ENCODE measurements at regions of chr16 and their contacts with region 1.

Region 1: DNA sequence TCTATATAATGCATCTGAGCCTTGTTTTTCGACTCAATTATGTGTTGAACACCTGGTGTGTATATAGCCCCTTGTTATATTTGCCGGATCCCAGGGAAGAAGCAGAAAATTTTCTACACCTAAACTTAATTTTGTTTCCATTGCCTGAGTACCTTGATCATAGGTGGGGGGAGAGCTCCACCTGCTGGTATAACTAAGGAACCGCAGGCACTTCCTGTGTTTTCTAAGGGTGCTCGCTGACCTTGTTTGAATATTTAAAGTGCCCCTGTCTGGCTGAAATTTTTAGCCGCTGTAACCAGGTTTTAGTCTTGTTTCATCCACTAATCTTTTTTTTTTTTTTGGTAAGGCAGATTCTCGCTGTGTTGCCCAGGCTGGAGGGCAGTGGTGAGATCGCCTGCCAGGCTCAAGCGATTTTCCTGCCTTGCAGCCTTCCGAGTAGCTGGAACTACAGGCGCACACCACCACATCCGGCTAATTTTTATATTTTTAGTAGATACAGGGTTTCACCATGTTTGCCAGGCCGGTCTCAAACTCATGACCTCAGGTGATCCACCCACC is 6.5 kb upstream of the NUBP1 start:
- DNase-seq: peak; percentile 80
- H3K4me3 Mint-ChIP-seq: peak overlapping the region; percentile 29
- H3K27ac Mint-ChIP-seq: no peak overlapping the region
- H3K4me1 Mint-ChIP-seq: peaks cover 19% of the 10 kb centered on the region
- H3K27me3 Mint-ChIP-seq: no peaks in the 10 kb centered on the region

Region 2: GRCh38 chr16:8868416-8869211 is 1868.5 kb before region 1 on chr16 and contains the start of gene CARHSP1:
- CTCF ChIA-PET with region 1: no interaction called
- intact Hi-C with region 1: loop called (anchors 2 kb)
- DNase-seq: peak; percentile 81
- H3K4me3 Mint-ChIP-seq: peak within 1 kb of the TSS; percentile 89
- H3K27ac Mint-ChIP-seq: peak within 1 kb of the TSS; percentile 83
- H3K4me1 Mint-ChIP-seq: peaks cover 36% of the 10 kb centered on the region
- H3K27me3 Mint-ChIP-seq: no peaks in the 10 kb centered on the region
- total RNA-seq, gene CARHSP1: 46.5 to 49.6 TPM

Region 3: GRCh38 chr16:10256784-10257641 is 480.1 kb before region 1 on chr16:
- CTCF ChIA-PET with region 1: interaction called, 3 read pairs
- intact Hi-C with region 1: loop called (anchors 1 kb)
- DNase-seq: peak; percentile 53
- H3K4me3 Mint-ChIP-seq: no peak overlapping the region
- H3K27ac Mint-ChIP-seq: no peak overlapping the region
- H3K4me1 Mint-ChIP-seq: peaks cover 6% of the 10 kb centered on the region
- H3K27me3 Mint-ChIP-seq: peaks cover 5% of the 10 kb centered on the region

Region 4: GRCh38 chr16:10314811-10315210 is 422.3 kb before region 1 on chr16:
- CTCF ChIA-PET with region 1: no interaction called
- intact Hi-C with region 1: loop called (anchors 2 kb)
- DNase-seq: peak; percentile 16
- H3K4me3 Mint-ChIP-seq: no peak overlapping the region
- H3K27ac Mint-ChIP-seq: no peak overlapping the region
- H3K4me1 Mint-ChIP-seq: peaks cover 11% of the 10 kb centered on the region
- H3K27me3 Mint-ChIP-seq: no peaks in the 10 kb centered on the region

Region 5: DNA sequence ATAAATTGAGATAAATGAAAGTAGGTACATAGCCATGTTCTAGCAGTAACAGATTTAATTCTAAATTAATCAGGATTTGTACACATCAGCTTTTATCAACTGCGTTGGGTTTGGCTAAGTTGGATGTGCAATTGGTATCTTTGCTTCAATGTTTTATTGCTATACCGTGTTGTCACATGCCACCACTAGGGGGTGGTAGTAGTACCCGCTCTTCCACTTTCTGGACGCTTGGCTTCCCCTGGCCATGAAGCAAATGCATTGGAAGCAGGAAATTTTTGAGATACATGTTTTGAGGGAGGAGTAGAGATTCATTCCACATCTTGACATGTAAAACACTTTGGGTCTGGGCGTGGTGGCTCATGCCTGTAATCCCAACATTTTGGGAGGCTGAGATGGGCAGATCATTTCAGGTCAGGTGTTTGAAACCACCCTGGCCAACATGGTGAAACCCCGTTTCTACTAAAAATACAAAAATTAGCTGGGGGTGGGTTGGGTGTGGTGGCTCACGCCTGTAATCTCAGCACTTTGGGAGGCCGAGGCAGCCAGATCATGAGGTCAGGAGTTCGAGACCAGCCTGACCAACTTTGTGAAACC is 215.4 kb before region 1 on chr16:
- CTCF ChIA-PET with region 1: interaction called, 30 read pairs
- intact Hi-C with region 1: loop called (anchors 1 kb)
- DNase-seq: peak; percentile 64
- H3K4me3 Mint-ChIP-seq: no peak overlapping the region
- H3K27ac Mint-ChIP-seq: no peak overlapping the region
- H3K4me1 Mint-ChIP-seq: no peaks in the 10 kb centered on the region
- H3K27me3 Mint-ChIP-seq: no peaks in the 10 kb centered on the region

Region 6: GRCh38 chr16:10668322-10669045 is 68.7 kb before region 1 on chr16:
- CTCF ChIA-PET with region 1: interaction called, 3 read pairs
- intact Hi-C with region 1: loop called (anchors 1 kb)
- DNase-seq: peak; percentile 20
- H3K4me3 Mint-ChIP-seq: no peak overlapping the region
- H3K27ac Mint-ChIP-seq: no peak overlapping the region
- H3K4me1 Mint-ChIP-seq: no peaks in the 10 kb centered on the region
- H3K27me3 Mint-ChIP-seq: no peaks in the 10 kb centered on the region

Region 7: DNA sequence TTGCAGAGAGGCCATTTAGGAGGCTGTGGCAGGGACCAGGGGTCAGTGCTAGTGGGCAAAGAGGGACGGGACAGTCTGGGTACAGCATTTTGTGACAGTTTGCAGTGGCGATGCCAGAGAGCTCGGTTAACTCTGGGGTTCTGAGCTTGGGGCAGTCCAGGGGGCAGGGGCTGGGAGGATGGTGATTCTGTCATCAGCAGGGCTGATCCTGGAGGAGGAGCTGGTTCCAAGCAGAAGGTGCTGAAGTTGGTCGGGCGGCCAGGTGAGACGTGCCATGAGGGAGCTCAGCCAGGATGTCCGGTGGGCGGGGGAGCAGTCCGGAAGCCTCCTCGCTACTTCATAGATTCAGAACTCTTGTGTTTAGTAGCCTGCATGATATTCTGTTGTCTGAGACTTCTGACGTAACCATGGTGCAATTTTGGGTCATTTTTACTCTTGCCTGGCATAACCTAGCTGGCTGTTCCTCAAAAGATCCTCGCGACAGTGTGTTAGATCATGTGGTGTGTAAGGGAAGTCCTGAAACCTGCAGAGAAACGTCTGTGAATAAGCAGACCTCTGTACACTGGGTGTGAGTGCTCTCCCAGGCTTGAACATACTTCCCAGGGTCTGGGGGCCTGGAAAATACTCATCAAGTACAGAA is 329.2 kb after region 1 on chr16:
- CTCF ChIA-PET with region 1: no interaction called
- intact Hi-C with region 1: no loop called
- DNase-seq: no peak
- H3K4me3 Mint-ChIP-seq: no peak overlapping the region
- H3K27ac Mint-ChIP-seq: peak overlapping the region; percentile 48
- H3K4me1 Mint-ChIP-seq: no peaks in the 10 kb centered on the region
- H3K27me3 Mint-ChIP-seq: no peaks in the 10 kb centered on the region